Posterior cingulate gyrus (tissue), 11 donors: ENCODE measurements at regions of chr16 and their contacts with region 1.

Region 1: DNA sequence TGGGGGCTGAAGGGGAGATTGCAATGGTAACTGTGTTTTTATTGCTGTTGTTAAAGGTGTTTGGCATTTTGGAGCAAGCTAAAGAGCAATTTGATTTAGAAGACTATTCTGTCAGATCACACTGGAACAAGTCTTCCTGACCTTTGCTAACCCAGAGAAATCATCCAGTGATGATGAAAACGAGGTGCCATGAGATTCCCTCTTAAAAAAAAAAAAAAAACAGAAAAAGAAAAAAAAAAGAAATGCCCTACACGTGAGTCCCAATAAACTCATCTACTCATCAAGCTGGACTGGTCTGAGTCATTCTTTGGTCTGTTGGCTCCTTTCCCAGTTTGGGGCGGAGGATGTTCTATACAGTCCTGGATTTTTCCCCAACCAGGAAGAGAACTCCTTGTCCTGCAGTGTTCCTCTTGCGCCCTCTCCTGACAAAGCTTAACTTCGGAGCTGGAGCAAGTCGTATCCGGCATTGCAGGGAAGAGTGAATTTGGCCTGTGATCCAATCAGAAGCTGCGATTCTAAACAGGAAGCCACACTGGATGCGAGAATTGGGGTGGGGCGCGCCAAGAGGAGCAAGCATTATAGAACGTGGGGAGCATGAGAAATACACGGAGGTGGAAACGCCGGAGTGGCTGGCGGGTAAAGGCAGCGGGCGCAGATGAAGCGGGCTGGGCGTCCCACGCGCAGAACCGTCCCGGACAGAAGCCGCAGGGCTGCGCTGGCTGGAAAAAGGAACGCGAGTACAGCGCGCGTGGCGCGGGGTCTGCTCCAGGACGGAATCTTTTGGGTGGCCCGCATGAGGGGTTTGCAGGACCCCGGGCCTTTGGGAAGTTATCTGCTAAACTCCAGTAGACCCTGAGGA is 22.4 kb upstream of the CRYM start:
- DNase-seq: peak; percentile 72 to 96 (median 87)

Region 2: GRCh38 chr16:21158208-21159110 is 142.1 kb before region 1 on chr16 and contains the start of gene LDAF1:
- intact Hi-C with region 1: loop called (anchors 1 kb)
- DNase-seq: peak; percentile 22 to 92 (median 46)

Region 3: DNA sequence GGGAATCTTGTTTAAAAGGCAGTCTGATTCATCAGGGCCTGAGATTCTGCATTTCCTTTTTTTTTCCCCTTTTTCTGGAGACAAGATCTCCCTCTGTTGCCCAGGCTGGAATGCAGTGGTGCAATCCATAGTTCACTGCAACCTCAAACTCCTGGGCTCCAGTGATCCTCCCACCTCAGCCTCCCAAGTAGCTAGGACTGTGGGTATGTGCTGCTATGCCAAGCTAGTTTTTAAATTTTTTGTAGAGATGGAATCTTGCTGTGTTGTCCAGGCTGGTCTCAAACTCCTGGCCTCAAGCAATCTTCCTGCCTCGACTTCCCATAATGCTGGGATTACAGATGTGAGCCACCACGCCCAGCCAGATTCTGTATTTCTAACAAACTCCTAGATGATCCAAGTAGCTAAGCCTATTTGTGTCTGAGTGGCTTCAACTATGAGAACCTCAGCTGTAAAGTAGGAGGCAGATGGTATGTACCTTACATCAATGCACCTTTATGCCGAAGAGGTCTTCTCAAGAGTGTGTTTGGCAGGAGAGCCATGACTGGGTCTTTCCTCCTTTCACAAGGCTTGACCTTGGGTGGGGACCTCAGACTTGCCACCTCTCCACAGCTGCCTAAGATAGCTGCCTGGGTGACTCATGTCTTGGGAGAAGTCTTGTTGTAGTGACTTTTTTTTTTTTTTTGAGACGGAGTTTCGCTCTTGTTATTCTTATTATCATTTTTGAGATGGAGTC is 131.1 kb before region 1 on chr16:
- intact Hi-C with region 1: no loop called
- DNase-seq: no peak

Region 4: DNA sequence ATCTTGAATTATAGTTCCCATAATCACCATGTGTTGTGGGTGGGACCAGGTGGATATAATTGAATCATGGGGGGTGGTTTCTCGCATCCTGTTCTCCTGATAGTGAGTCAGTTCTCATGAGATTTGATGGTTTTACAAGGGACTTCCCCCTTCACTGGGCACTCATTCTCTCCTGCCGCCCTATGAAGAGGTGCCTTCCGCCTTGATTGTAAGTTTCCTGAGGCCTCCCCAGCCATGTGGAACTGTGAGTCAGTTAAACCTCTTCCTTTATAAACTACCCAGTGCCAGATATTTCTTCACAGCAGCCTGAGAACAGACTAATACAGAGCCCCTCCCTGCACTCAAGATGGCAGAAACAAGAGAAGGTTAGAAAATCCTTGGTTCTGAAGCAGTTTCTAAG is 115.7 kb before region 1 on chr16:
- intact Hi-C with region 1: loop called (anchors 1 kb)
- DNase-seq: no peak

Region 5: GRCh38 chr16:21523411-21524067 is 223.0 kb after region 1 on chr16:
- intact Hi-C with region 1: loop called (anchors 10 kb)
- DNase-seq: peak in 8 of 10 donors; percentile 78 to 97 (median 85)